PC-3 (cell line): ENCODE measurements at regions of chr12 and their contacts with region 1.

Region 1: GRCh38 chr12:65986047-65986446 is 144.5 kb downstream of the LLPH start:
- DNase-seq: no peak
- ATAC-seq: no peak
- H3K4me3 ChIP-seq: no peak overlapping the region
- H3K27ac ChIP-seq: no peak overlapping the region
- H3K4me1 ChIP-seq: no peaks in the 10 kb centered on the region
- H3K27me3 ChIP-seq: no peaks in the 10 kb centered on the region
- CTCF ChIP-seq: no peak

Region 2: GRCh38 chr12:66087365-66087943 is 101.4 kb after region 1 on chr12:
- CTCF ChIA-PET with region 1: no interaction called
- POLR2A ChIA-PET with region 1: no interaction called
- intact Hi-C with region 1: loop called (anchors 5 kb)
- DNase-seq: peak; percentile 84
- ATAC-seq: peak; percentile 75
- H3K4me3 ChIP-seq: no peak overlapping the region
- H3K27ac ChIP-seq: no peak overlapping the region
- H3K4me1 ChIP-seq: peaks cover 10% of the 10 kb centered on the region
- H3K27me3 ChIP-seq: no peaks in the 10 kb centered on the region
- CTCF ChIP-seq: peak; percentile 89

Region 3: GRCh38 chr12:66388517-66388916 is 402.5 kb after region 1 on chr12:
- CTCF ChIA-PET with region 1: no interaction called
- POLR2A ChIA-PET with region 1: no interaction called
- intact Hi-C with region 1: no loop called
- DNase-seq: no peak
- ATAC-seq: no peak
- H3K4me3 ChIP-seq: no peak overlapping the region
- H3K27ac ChIP-seq: no peak overlapping the region
- H3K4me1 ChIP-seq: no peaks in the 10 kb centered on the region
- H3K27me3 ChIP-seq: no peaks in the 10 kb centered on the region
- CTCF ChIP-seq: no peak